Activated T-helper 1 cell treated with anti-CD3 and anti-CD28 coated beads, Interleukin-12 subunit alpha, Interleukin-12 subunit beta, Interleukin-2, Interleukin-4 antibody, amounts not matched to agents 30 ng/mL and 10 ng/mL and 1 ng/mL, durations not matched to agents 14 hours and 24 hours and 36 hours (primary cell): ENCODE measurements at regions of chr5 and their contacts with region 1.

Region 1: GRCh38 chr5:34898258-34898895 is 16.9 kb downstream of the RAD1 start:
- DNase-seq: peak; percentile 27
- H3K4me3 Mint-ChIP-seq: no peak overlapping the region
- H3K27ac Mint-ChIP-seq: no peak overlapping the region
- H3K4me1 Mint-ChIP-seq: no peaks in the 10 kb centered on the region
- H3K27me3 Mint-ChIP-seq: no peaks in the 10 kb centered on the region

Region 2: GRCh38 chr5:34474573-34475021 is 423.8 kb before region 1 on chr5:
- intact Hi-C with region 1: loop called (anchors 1 kb)
- DNase-seq: no peak
- H3K4me3 Mint-ChIP-seq: no peak overlapping the region
- H3K27ac Mint-ChIP-seq: no peak overlapping the region
- H3K4me1 Mint-ChIP-seq: no peaks in the 10 kb centered on the region
- H3K27me3 Mint-ChIP-seq: peaks cover 2% of the 10 kb centered on the region

Region 3: GRCh38 chr5:34486160-34486848 is 412.1 kb before region 1 on chr5:
- intact Hi-C with region 1: loop called (anchors 1 kb)
- DNase-seq: peak; percentile 26
- H3K4me3 Mint-ChIP-seq: no peak overlapping the region
- H3K27ac Mint-ChIP-seq: no peak overlapping the region
- H3K4me1 Mint-ChIP-seq: no peaks in the 10 kb centered on the region
- H3K27me3 Mint-ChIP-seq: peaks cover 18% of the 10 kb centered on the region

Region 4: GRCh38 chr5:35103637-35104299 is 205.4 kb after region 1 on chr5:
- intact Hi-C with region 1: no loop called
- DNase-seq: no peak
- H3K4me3 Mint-ChIP-seq: no peak overlapping the region
- H3K27ac Mint-ChIP-seq: no peak overlapping the region
- H3K4me1 Mint-ChIP-seq: no peaks in the 10 kb centered on the region
- H3K27me3 Mint-ChIP-seq: peaks cover 10% of the 10 kb centered on the region